HEK293 (cell line): ENCODE measurements at regions of chr1 and their contacts with region 1.

Region 1: GRCh38 chr1:157505481-157506272 is 46.6 kb downstream of the FCRL5 start:
- H3K4me3 ChIP-seq: no peak overlapping the region
- H3K27ac ChIP-seq: no peak overlapping the region
- H3K4me1 ChIP-seq: no peaks in the 10 kb centered on the region
- CTCF ChIP-seq: peak; percentile 54; the same call in 1 of the 2 replicates

Region 2: DNA sequence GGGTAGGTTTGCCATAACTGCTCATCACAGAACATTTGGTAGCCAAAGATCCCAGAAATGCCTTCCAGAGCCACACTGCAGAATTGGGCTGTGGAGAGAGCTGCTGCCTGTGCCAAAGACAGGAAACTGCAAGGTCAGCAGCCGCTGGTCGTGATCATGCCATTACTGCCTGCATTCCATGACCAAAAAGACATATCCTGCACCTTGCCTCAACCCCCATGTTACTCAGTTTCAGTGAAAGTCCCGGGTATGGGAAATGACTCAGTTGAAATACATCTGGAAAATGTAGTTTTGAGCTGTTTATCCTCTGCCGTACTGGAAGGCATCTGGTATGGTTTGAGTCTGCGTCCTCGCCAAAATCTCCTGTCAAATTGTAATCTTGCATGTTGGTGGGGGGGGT is 115.0 kb before region 1 on chr1:
- CTCF ChIA-PET with region 1: interaction called, 10 read pairs
- POLR2A ChIA-PET with region 1: no interaction called
- H3K4me3 ChIP-seq: no peak overlapping the region
- H3K27ac ChIP-seq: no peak overlapping the region
- H3K4me1 ChIP-seq: no peaks in the 10 kb centered on the region
- CTCF ChIP-seq: no peak

Region 3: DNA sequence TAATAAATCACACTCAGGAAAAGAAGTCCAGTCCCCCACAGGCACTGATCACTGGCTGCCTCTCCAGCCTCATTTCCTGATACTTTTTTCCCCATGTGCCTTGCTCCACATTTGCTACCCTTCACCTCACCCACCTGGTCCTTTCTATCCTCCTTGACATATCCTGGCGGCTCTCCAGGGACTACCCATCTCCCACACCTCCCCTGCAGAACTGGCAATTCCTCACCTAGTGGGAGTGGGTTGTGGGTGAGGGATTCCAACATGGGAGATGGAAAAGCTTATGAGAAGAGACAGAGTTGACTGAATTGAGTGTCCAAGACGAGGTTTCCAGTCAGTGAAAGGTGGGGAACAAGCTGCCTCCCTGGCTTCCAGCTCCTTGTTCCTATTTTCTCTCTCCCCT is 23.0 kb before region 1 on chr1:
- CTCF ChIA-PET with region 1: interaction called, 10 read pairs
- POLR2A ChIA-PET with region 1: no interaction called
- H3K4me3 ChIP-seq: no peak overlapping the region
- H3K27ac ChIP-seq: no peak overlapping the region
- H3K4me1 ChIP-seq: no peaks in the 10 kb centered on the region
- CTCF ChIP-seq: no peak

Region 4: GRCh38 chr1:157540852-157541251 is 35.2 kb after region 1 on chr1:
- CTCF ChIA-PET with region 1: no interaction called
- POLR2A ChIA-PET with region 1: no interaction called
- H3K4me3 ChIP-seq: no peak overlapping the region
- H3K27ac ChIP-seq: no peak overlapping the region
- H3K4me1 ChIP-seq: no peaks in the 10 kb centered on the region
- CTCF ChIP-seq: no peak